GM12878 (cell line): ENCODE measurements at regions of chr10 and their contacts with region 1.

Region 1: GRCh38 chr10:14039968-14040671 is 290.6 kb downstream of the FRMD4A start:
- DNase-seq: no peak
- ATAC-seq: no peak
- H3K4me3 ChIP-seq: no peak overlapping the region
- H3K27ac ChIP-seq: no peak overlapping the region
- H3K4me1 ChIP-seq: peaks cover 5% of the 10 kb centered on the region; the same call in 1 of the 2 replicates
- H3K27me3 ChIP-seq: no peaks in the 10 kb centered on the region
- CTCF ChIP-seq: no peak
- EP300 ChIP-seq: no peak
- POLR2A ChIP-seq: no peak
- RAD21 ChIP-seq: no peak

Region 2: DNA sequence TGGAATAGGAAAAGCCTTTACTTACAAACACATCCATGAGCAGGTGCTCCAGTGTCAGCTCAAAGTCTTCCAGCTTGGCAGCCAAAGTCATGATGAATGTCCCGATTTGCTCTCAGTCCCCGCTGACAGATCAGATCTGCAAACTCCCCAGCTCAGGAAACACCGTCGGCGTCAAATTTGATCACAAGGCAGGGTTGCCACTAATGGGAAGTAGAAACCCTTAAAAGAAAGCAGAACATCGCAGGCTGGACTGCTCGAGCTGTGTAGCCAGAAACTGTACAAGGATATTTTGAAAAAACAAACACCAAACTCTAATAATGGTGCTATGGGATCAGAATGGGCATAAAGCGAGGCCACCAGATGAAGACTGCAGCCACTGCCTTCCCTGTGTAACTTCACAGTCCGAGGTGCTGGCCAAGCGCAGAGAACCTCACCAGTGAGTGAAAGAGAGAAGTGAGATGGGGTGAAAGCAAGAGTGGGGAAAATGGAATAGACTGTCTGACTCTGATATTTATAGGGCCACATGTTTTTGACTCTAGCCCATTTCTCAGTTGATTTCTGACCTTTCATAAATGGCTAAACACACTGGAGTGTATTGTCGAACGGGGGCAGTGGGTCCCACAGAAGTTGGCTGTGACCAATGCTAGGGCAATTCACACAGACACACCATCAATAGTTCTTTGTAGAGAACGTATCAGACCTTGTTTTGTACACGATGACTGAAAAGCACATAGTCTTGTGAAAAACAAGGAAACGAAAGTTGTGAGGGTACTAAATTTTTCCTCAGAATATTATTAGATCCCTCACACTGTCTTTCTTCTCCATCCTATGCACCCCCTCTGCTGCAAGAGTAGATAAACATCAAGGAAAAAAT is 15.6 kb before region 1 on chr10:
- CTCF ChIA-PET with region 1: interaction called, 7 read pairs
- POLR2A ChIA-PET with region 1: interaction called, 4 read pairs
- RAD21 ChIA-PET with region 1: interaction called, 7 read pairs
- SMC1A ChIA-PET with region 1: interaction called, 12 read pairs
- in situ Hi-C with region 1: no loop called
- intact Hi-C with region 1: no loop called
- DNase-seq: no peak
- ATAC-seq: peak; percentile 54
- H3K4me3 ChIP-seq: peak overlapping the region; percentile 48; the same call in 1 of the 2 replicates
- H3K27ac ChIP-seq: peak overlapping the region; percentile 57
- H3K4me1 ChIP-seq: no peaks in the 10 kb centered on the region; the same call in 1 of the 2 replicates
- H3K27me3 ChIP-seq: no peaks in the 10 kb centered on the region; a peak in 2 of 4 replicates
- CTCF ChIP-seq: no peak
- EP300 ChIP-seq: no peak
- POLR2A ChIP-seq: no peak
- RAD21 ChIP-seq: no peak